HepG2 (cell line): ENCODE measurements at regions of chr12 and their contacts with region 1.

Region 1: GRCh38 chr12:93243689-93244513 is 133.8 kb upstream of the NUDT4 start:
- DNase-seq: peak; percentile 89
- ATAC-seq: peak; percentile 86
- H3K4me3 ChIP-seq: peak overlapping the region in 2 of 3 experiments; percentile 15 to 22; a peak in 3 of 6 replicates
- H3K27ac ChIP-seq: peak overlapping the region; percentile 41
- H3K4me1 ChIP-seq: peaks cover 47% of the 10 kb centered on the region
- H3K27me3 ChIP-seq: no peaks in the 10 kb centered on the region
- CTCF ChIP-seq: no peak
- EP300 ChIP-seq: peak; percentile 71 to 88; a peak in 3 of 4 replicates
- POLR2A ChIP-seq: no peak
- RAD21 ChIP-seq: no peak

Region 2: DNA sequence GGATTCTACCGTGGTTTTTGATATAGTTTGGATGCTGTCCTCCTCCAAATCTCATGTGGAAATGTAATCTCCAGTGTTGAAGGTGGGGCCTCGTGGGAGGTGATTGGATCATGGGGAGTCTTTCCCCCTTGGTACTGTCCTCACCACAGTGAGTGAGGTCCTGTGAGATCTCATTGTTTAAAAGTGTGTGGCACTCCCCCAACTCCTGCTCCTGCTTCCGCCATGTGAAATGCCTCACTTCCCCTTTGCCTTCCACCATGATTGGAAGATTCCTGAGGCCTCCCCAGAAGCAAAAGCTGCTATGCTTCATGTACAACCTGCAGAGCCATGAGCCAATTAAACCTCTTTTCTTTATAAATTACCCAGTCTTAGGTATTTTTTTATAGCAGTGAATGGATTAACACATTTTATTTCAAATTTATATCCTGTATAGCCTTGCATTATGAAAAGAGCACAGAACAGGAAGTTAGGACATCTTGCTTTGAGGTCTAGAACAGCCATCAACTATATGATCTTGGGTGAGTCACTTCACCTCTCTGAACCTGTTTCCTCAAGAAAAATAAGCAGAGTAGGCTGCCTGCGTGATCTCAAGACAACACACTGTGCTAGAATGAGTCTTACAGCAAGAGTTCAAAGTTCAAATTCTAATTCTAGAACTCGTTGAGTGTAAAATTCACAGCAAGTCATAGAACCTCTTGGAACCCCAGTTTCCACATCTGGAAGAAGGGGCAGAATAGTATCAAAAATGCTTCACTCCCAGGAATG is 153.9 kb before region 1 on chr12:
- CTCF ChIA-PET with region 1: no interaction called
- POLR2A ChIA-PET with region 1: no interaction called
- in situ Hi-C with region 1: no loop called
- intact Hi-C with region 1: loop called (anchors 1 kb)
- DNase-seq: no peak
- ATAC-seq: no peak
- H3K4me3 ChIP-seq: no peak overlapping the region
- H3K27ac ChIP-seq: no peak overlapping the region
- H3K4me1 ChIP-seq: peaks cover 88% of the 10 kb centered on the region
- H3K27me3 ChIP-seq: no peaks in the 10 kb centered on the region
- CTCF ChIP-seq: no peak
- EP300 ChIP-seq: no peak
- POLR2A ChIP-seq: no peak
- RAD21 ChIP-seq: no peak

Region 3: GRCh38 chr12:93526786-93527428 is 283.0 kb after region 1 on chr12:
- CTCF ChIA-PET with region 1: no interaction called
- POLR2A ChIA-PET with region 1: no interaction called
- in situ Hi-C with region 1: no loop called
- intact Hi-C with region 1: no loop called
- DNase-seq: peak; percentile 86
- ATAC-seq: peak; percentile 55
- H3K4me3 ChIP-seq: no peak overlapping the region
- H3K27ac ChIP-seq: no peak overlapping the region
- H3K4me1 ChIP-seq: peaks cover 42% of the 10 kb centered on the region
- H3K27me3 ChIP-seq: no peaks in the 10 kb centered on the region; a peak in 1 of 5 replicates
- CTCF ChIP-seq: no peak
- EP300 ChIP-seq: peak in 1 of 2 experiments; percentile 60; a peak in 2 of 4 replicates
- POLR2A ChIP-seq: no peak
- RAD21 ChIP-seq: no peak